IMR-90 (cell line): ENCODE measurements at regions of chr2 and their contacts with region 1.

Region 1: DNA sequence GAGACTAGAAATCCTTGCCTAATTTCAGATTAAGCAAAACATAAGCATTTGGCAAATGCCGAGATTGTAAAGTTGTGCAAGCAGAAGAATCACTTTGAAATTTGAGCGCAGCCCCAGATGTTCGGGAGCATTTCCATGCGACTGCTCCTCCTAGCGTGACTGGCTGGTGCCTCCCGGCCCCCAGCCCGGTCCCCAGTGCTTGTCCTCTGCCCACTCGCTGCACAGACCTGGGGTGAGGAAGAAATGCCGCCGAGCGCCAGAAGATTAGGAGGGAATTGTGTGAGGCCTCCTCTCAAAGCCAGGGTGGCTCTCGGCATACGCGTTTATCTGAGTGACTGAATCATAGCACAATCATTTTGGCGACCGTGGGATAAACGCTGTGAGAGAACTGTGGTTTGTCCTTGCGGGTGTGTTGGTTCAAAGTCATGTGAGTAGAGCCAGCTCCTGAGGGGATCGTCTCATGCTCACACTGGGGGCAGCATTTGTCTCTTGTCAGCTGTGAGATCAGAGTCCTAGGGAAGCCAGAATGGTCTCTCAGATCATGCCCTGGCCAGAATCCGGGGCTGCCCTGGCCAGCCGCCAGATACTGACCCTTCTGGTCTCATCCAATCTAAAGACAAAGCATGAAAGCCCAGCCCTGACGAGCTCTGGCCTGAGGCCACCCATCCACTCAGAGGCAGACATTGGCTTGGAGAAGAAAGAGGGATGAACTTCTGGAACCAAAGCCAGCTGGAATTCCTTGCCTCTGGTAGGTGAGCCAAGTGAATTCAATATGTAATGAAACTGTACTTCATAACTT is 189.3 kb downstream of the SH3RF3 start:
- DNase-seq: peak; percentile 98
- ATAC-seq: peak; percentile 60
- H3K4me3 ChIP-seq: peak overlapping the region; percentile 2
- H3K27ac ChIP-seq: peak overlapping the region; percentile 73
- H3K4me1 ChIP-seq: peaks cover 41% of the 10 kb centered on the region
- H3K27me3 ChIP-seq: no peaks in the 10 kb centered on the region
- CTCF ChIP-seq: peak; percentile 42
- POLR2A ChIP-seq: peak; percentile 53; the same call in 1 of the 2 replicates
- RAD21 ChIP-seq: peak; percentile 31

Region 2: GRCh38 chr2:109238580-109238979 is 79.8 kb before region 1 on chr2:
- CTCF ChIA-PET with region 1: no interaction called
- POLR2A ChIA-PET with region 1: no interaction called
- dilution Hi-C with region 1: no loop called
- in situ Hi-C with region 1: no loop called
- intact Hi-C with region 1: loop called (anchors 5 kb)
- DNase-seq: peak; percentile 95
- ATAC-seq: peak; percentile 68
- H3K4me3 ChIP-seq: no peak overlapping the region
- H3K27ac ChIP-seq: peak overlapping the region; percentile 96
- H3K4me1 ChIP-seq: peaks cover 45% of the 10 kb centered on the region
- H3K27me3 ChIP-seq: no peaks in the 10 kb centered on the region
- CTCF ChIP-seq: no peak
- POLR2A ChIP-seq: no peak
- RAD21 ChIP-seq: peak; percentile 10; the same call in 1 of the 2 replicates

Region 3: GRCh38 chr2:109438773-109439389 is 120.5 kb after region 1 on chr2:
- CTCF ChIA-PET with region 1: no interaction called
- POLR2A ChIA-PET with region 1: no interaction called
- dilution Hi-C with region 1: no loop called
- in situ Hi-C with region 1: no loop called
- intact Hi-C with region 1: loop called (anchors 5 kb)
- DNase-seq: peak; percentile 86
- ATAC-seq: peak; percentile 92
- H3K4me3 ChIP-seq: no peak overlapping the region
- H3K27ac ChIP-seq: no peak overlapping the region
- H3K4me1 ChIP-seq: peaks cover 15% of the 10 kb centered on the region
- H3K27me3 ChIP-seq: no peaks in the 10 kb centered on the region
- CTCF ChIP-seq: no peak
- POLR2A ChIP-seq: no peak
- RAD21 ChIP-seq: no peak

Region 4: DNA sequence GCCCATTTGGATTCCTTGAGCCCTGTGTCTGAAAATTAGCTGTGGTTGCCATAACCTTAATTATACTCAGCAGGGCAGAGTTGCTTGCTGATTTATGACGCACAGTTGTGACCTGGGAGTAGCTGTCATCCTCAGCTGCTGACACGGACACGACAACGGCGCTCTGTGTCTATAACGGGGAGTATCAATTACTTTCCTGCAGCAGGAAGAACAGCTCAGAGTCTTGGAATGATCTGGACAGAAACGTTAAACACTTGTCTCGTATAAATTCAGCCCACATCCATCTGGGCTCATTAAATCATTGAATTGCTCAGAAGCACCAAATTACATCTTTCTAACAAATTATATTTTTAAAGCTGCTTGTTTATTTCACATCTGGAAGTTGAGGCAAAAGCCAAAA is 179.1 kb after region 1 on chr2:
- CTCF ChIA-PET with region 1: no interaction called
- POLR2A ChIA-PET with region 1: no interaction called
- dilution Hi-C with region 1: no loop called
- in situ Hi-C with region 1: no loop called
- intact Hi-C with region 1: loop called (anchors 5 kb)
- DNase-seq: peak; percentile 95
- ATAC-seq: peak; percentile 89
- H3K4me3 ChIP-seq: no peak overlapping the region
- H3K27ac ChIP-seq: peak overlapping the region; percentile 42; the same call in 1 of the 2 replicates
- H3K4me1 ChIP-seq: peaks cover 14% of the 10 kb centered on the region
- H3K27me3 ChIP-seq: no peaks in the 10 kb centered on the region
- CTCF ChIP-seq: no peak
- POLR2A ChIP-seq: no peak
- RAD21 ChIP-seq: no peak